ENCODE measurements at regions of chr14 and their contacts with region 1.

Region 1: GRCh38 chr14:99518441-99519346 is 37.5 kb downstream of the CCNK start:
- DNase-seq: peak; percentile 76 to 88 (median 87)
- ATAC-seq: peak; percentile 88 to 95 (median 90)
- H3K4me3 ChIP-seq: no peak overlapping the region
- H3K27ac ChIP-seq: no peak overlapping the region
- H3K4me1 ChIP-seq: peaks cover 0 to 3% (median 0%) of the 10 kb centered on the region in 4 donors
- H3K27me3 ChIP-seq: no peaks in the 10 kb centered on the region
- CTCF ChIP-seq: peak; percentile 97 to 100 (median 98)
- POLR2A ChIP-seq: no peak

Region 2: GRCh38 chr14:99378782-99379214 is 139.9 kb before region 1 on chr14:
- intact Hi-C with region 1: no loop called
- DNase-seq: peak in 1 of 3 donors; percentile 20
- ATAC-seq: no peak
- H3K4me3 ChIP-seq: no peak overlapping the region
- H3K27ac ChIP-seq: no peak overlapping the region
- H3K4me1 ChIP-seq: no peaks in the 10 kb centered on the region
- H3K27me3 ChIP-seq: no peaks in the 10 kb centered on the region
- CTCF ChIP-seq: no peak
- POLR2A ChIP-seq: no peak

Region 3: GRCh38 chr14:99628832-99629618 is 110.3 kb after region 1 on chr14:
- intact Hi-C with region 1: loop called (anchors 5 kb)
- DNase-seq: peak; percentile 82 to 84 (median 83)
- ATAC-seq: peak; percentile 95 to 99 (median 98)
- H3K4me3 ChIP-seq: no peak overlapping the region
- H3K27ac ChIP-seq: no peak overlapping the region
- H3K4me1 ChIP-seq: no peaks in the 10 kb centered on the region
- H3K27me3 ChIP-seq: no peaks in the 10 kb centered on the region
- CTCF ChIP-seq: peak; percentile 95 to 100 (median 98)
- POLR2A ChIP-seq: no peak